ENCODE measurements at regions of chr19 and their contacts with region 1.

Region 1: GRCh38 chr19:45178262-45179071 is at the start of gene BLOC1S3:
- DNase-seq: peak; percentile 100
- H3K4me3 ChIP-seq: peak within 1 kb of the TSS; percentile 67 to 92 (median 88)
- H3K27ac ChIP-seq: peak within 1 kb of the TSS; percentile 95
- H3K4me1 ChIP-seq: peaks cover 25% of the 10 kb centered on the region
- H3K27me3 ChIP-seq: no peaks in the 10 kb centered on the region
- CTCF ChIP-seq: peak; percentile 21 to 41
- total RNA-seq, gene BLOC1S3: 7.8 to 14.4 TPM

Region 2: GRCh38 chr19:45001087-45001739 is 177.3 kb before region 1 on chr19 and contains the start of gene RELB:
- CTCF ChIA-PET with region 1: no interaction called
- dilution Hi-C with region 1: no loop called
- in situ Hi-C with region 1: no loop called
- intact Hi-C with region 1: loop called (anchors 5 kb)
- DNase-seq: peak; percentile 88
- H3K4me3 ChIP-seq: peak within 1 kb of the TSS; percentile 62 to 73 (median 68)
- H3K27ac ChIP-seq: peak within 1 kb of the TSS; percentile 81
- H3K4me1 ChIP-seq: peaks cover 6% of the 10 kb centered on the region
- H3K27me3 ChIP-seq: no peaks in the 10 kb centered on the region
- CTCF ChIP-seq: no peak
- total RNA-seq, gene RELB: 6.2 to 26.7 TPM

Region 3: GRCh38 chr19:45104658-45105349 is 73.7 kb before region 1 on chr19:
- CTCF ChIA-PET with region 1: no interaction called
- dilution Hi-C with region 1: loop called (anchors 5 kb)
- in situ Hi-C with region 1: no loop called
- intact Hi-C with region 1: no loop called
- DNase-seq: peak; percentile 27
- H3K4me3 ChIP-seq: no peak overlapping the region
- H3K27ac ChIP-seq: no peak overlapping the region
- H3K4me1 ChIP-seq: peaks cover 28% of the 10 kb centered on the region
- H3K27me3 ChIP-seq: no peaks in the 10 kb centered on the region
- CTCF ChIP-seq: no peak

Region 4: GRCh38 chr19:45245334-45245787 is 66.9 kb after region 1 on chr19 and contains the start of gene EXOC3L2:
- CTCF ChIA-PET with region 1: no interaction called
- dilution Hi-C with region 1: loop called (anchors 5 kb)
- in situ Hi-C with region 1: no loop called
- intact Hi-C with region 1: no loop called
- DNase-seq: no peak
- H3K4me3 ChIP-seq: no peak within 1 kb of the TSS
- H3K27ac ChIP-seq: no peak within 1 kb of the TSS
- H3K4me1 ChIP-seq: peaks cover 5% of the 10 kb centered on the region
- H3K27me3 ChIP-seq: no peaks in the 10 kb centered on the region
- CTCF ChIP-seq: no peak
- total RNA-seq, gene EXOC3L2: 0.35 TPM in 1 of 2 donors, not detected in the other

Region 5: DNA sequence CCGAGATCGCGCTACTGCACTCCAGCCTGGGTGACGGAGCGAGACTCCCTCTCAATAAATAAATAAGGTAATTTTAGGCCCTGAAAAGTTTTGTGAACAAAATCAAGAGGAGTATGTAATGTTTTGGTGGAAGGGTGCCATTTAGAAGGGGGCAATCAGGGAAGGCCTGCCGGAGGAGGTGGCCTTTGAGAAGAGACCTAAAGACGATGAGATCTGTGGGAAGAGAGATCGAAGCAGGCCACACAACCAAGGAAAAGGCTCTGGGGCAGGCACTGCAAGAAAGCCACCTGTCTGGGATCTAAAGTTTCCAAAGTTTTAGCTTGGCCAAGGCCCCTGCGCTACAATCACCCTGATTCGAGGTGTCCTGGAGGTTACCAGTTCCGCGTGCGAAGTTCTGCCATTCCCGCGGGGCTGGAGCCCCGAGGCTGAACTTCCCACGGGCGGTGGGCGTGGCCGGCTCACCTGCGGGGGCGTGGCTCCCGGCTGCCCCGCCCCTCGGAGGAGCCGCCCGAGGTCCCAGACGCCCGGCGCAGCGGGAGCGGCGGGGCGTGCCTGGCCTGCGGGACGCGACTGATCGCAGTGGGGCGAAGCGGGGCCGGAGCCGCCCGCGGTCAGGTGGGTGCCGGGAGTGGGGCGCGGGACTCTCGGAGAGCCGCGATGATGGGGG is 161.9 kb after region 1 on chr19 and contains the start of gene KLC3:
- CTCF ChIA-PET with region 1: no interaction called
- dilution Hi-C with region 1: no loop called
- in situ Hi-C with region 1: loop called in 1 of 2 experiments (anchors 25 kb)
- intact Hi-C with region 1: no loop called
- DNase-seq: peak; percentile 53
- H3K4me3 ChIP-seq: peak within 1 kb of the TSS; percentile 59 to 88 (median 72)
- H3K27ac ChIP-seq: peak within 1 kb of the TSS; percentile 38
- H3K4me1 ChIP-seq: peaks cover 22% of the 10 kb centered on the region
- H3K27me3 ChIP-seq: no peaks in the 10 kb centered on the region
- CTCF ChIP-seq: no peak
- total RNA-seq, gene KLC3: 39.3 to 56.5 TPM

Measured in mammary epithelial cell (primary cell).